ENCODE measurements at regions of chr19 and their contacts with region 1.

Region 1: DNA sequence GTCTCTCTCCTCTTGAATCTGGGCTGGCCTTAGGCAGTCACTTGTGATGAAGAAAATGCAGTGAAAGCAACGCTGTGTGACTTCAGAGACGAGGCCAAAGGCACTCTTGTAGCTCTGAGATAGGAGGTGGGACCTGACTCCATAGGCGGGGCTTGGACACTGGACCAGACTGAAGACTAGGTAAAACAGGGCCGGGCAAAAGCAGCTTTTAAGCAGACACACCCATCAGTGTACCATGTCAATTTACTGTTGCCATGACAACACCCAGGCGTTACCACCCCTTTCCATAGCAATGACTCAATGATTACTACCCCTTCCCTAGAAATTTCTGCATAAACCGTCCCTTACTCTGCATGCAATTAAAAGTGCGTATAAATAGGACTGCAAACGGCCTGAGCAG is 6.6 kb upstream of the EID2 start:
- DNase-seq: no peak
- H3K4me3 ChIP-seq: no peak overlapping the region
- H3K27ac ChIP-seq: no peak overlapping the region
- H3K4me1 ChIP-seq: peaks cover 15% of the 10 kb centered on the region
- CTCF ChIP-seq: no peak

Region 2: GRCh38 chr19:39480337-39481228 is 66.0 kb before region 1 on chr19 and contains the start of gene TIMM50:
- CTCF ChIA-PET with region 1: no interaction called
- POLR2A ChIA-PET with region 1: no interaction called
- intact Hi-C with region 1: no loop called
- DNase-seq: peak; percentile 98
- H3K4me3 ChIP-seq: peak within 1 kb of the TSS; percentile 91
- H3K27ac ChIP-seq: peak within 1 kb of the TSS; percentile 57
- H3K4me1 ChIP-seq: peaks cover 17% of the 10 kb centered on the region
- CTCF ChIP-seq: no peak
- total RNA-seq, gene TIMM50: 98.1 and 116 TPM in 2 replicates

Region 3: DNA sequence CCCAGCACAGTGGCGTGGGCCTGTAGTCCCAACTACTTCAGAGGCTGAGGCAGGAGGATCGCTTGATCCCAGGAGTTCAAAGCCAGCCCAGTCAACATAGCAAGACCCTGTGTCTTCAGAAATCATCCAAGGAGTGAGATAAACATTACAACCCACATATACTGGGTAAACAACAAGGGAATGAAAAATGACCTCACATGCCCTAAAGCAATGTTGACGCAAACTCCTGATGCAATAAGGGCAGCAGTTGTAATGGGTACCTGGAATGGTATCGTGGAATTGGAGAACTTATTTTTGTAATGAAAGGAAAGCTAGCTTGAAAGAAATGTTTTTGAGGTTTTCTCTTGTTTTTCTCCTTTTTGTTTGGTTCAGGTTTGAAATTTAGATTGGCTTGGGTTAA is 84.6 kb after region 1 on chr19:
- CTCF ChIA-PET with region 1: no interaction called
- POLR2A ChIA-PET with region 1: no interaction called
- intact Hi-C with region 1: no loop called
- DNase-seq: no peak
- H3K4me3 ChIP-seq: no peak overlapping the region
- H3K27ac ChIP-seq: no peak overlapping the region
- H3K4me1 ChIP-seq: no peaks in the 10 kb centered on the region
- CTCF ChIP-seq: no peak

Region 4: DNA sequence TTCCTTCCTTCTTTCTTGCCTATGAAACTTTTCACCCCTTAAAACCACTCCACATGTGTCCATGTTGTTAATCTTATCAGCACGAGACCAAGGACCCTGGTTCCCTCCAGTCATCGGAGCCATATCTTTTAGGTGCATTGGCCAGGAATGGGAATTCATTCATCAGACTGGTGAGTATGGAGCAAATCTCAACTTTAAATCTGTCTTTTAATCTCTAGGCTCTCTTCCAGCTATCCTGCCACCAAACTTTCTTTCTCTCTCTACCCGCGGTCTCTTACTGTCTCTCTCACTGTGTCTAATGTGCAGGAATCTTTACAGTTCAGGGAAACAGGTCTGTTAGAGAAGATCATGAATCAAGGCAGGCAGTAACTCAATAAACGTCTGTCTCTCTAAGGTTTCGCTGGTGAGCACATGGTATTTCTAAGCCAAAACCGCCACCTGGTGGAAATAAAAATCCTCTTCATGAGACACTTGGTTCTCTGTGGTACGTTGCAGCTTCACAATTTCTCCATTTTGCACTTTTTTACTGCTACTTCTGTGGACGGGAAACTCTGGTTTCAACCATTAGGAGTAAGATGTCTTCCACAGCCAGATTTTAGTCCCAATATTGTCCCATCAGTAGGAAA is 125.3 kb after region 1 on chr19:
- CTCF ChIA-PET with region 1: no interaction called
- POLR2A ChIA-PET with region 1: no interaction called
- intact Hi-C with region 1: loop called (anchors 1 kb)
- DNase-seq: peak; percentile 73
- H3K4me3 ChIP-seq: no peak overlapping the region
- H3K27ac ChIP-seq: no peak overlapping the region
- H3K4me1 ChIP-seq: no peaks in the 10 kb centered on the region
- CTCF ChIP-seq: peak; percentile 82